A673 (cell line): ENCODE measurements at regions of chr17 and their contacts with region 1.

Region 1: GRCh38 chr17:76805319-76805718 is 62.9 kb upstream of the MGAT5B start:
- DNase-seq: no peak
- H3K4me3 ChIP-seq: no peak overlapping the region
- H3K27ac ChIP-seq: no peak overlapping the region
- H3K4me1 ChIP-seq: no peaks in the 10 kb centered on the region
- H3K27me3 ChIP-seq: no peaks in the 10 kb centered on the region
- CTCF ChIP-seq: no peak

Region 2: DNA sequence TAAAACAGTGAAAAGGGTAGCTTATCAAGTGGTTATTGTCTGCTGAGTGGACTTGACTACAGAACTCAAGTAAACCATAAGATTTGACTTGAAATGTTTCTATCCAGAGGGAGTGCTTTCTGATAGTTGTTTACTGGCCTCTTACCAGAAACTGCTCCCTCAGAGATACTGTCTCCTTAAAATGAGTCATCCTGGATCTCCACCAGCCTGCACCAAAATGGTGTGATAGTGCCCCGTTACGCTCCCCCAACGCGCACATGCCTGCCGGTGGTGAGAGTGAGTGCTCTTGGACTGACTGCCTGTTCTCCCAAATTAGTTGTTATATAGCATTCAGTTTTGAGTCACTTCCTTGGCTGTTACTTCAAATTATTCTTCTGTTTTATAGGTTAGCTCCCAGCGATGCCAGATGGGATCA is 242.6 kb before region 1 on chr17:
- CTCF ChIA-PET with region 1: no interaction called
- POLR2A ChIA-PET with region 1: no interaction called
- intact Hi-C with region 1: no loop called
- DNase-seq: peak; percentile 86
- H3K4me3 ChIP-seq: no peak overlapping the region
- H3K27ac ChIP-seq: peak overlapping the region; percentile 18
- H3K4me1 ChIP-seq: peaks cover 34% of the 10 kb centered on the region
- H3K27me3 ChIP-seq: no peaks in the 10 kb centered on the region
- CTCF ChIP-seq: no peak

Region 3: DNA sequence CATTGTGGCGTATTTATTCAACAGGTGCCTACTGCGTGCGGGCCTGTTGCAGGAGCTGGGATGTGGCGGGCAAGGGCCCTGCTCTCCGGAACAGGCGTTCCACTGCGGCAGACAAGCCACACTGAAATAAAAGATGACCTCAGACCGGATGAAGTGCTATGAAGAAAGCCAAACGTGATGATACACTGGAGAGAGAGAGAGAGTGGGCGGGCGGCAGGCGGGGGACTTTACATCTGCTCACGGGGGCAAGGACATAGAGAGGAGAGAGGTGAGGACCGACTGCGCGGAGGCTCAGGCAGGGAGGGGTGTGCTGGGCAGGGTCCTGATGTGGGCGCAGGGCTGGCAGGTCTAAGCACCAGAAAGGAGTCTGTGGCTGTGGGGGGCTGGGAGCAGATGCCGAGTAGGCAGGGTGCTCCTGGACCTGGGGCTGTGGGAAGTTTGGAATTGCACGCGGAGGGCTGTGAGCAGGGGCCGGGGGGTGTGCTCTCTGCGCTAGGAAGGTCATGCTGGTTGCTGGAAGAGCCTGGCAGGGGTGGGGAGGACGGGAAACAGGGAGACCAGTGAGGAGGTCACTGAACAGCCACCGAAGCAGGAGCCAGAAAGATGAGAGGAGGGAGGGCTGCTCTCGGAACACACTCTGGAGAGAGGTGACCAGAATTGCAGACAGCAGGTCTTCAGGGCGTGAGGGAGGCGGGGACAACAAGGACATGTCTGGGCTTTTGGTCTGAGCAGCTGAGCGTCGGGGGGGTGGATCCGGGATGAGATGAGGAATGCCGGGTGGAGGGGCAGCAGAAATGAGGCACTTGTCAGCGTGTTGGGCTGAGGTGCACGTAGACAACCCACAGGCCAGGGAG is 104.5 kb before region 1 on chr17:
- CTCF ChIA-PET with region 1: no interaction called
- POLR2A ChIA-PET with region 1: no interaction called
- intact Hi-C with region 1: no loop called
- DNase-seq: no peak
- H3K4me3 ChIP-seq: no peak overlapping the region
- H3K27ac ChIP-seq: no peak overlapping the region
- H3K4me1 ChIP-seq: peaks cover 19% of the 10 kb centered on the region
- H3K27me3 ChIP-seq: no peaks in the 10 kb centered on the region
- CTCF ChIP-seq: no peak

Region 4: DNA sequence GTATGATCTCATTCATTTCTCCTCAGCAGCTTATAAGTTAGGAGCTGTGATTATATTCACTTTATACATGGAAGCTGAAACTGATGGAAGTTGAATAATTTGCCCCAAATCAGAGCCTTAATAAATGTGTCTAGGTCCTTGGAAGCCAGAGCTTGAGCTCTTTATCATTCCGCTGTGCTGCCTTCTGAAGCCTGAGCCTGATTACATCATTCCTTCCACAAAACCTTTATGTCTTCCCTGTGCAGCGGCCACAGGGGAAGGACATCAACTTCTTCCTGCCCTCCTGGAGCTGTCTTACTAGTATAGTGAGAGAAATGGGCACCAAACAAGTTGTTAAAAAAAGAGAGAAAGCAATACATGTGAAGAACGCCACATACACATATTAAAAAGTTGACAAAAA is 1160.0 kb after region 1 on chr17:
- CTCF ChIA-PET with region 1: no interaction called
- POLR2A ChIA-PET with region 1: interaction called, 13 read pairs
- intact Hi-C with region 1: no loop called
- DNase-seq: no peak
- H3K4me3 ChIP-seq: no peak overlapping the region
- H3K27ac ChIP-seq: no peak overlapping the region
- H3K4me1 ChIP-seq: peaks cover 41% of the 10 kb centered on the region
- H3K27me3 ChIP-seq: no peaks in the 10 kb centered on the region
- CTCF ChIP-seq: no peak